ENCODE measurements at regions of chr2 and their contacts with region 1.

Region 1: GRCh38 chr2:85551698-85552678 is 9.3 kb downstream of the GGCX start:
- DNase-seq: peak; percentile 95
- H3K4me3 ChIP-seq: no peak overlapping the region
- H3K27ac ChIP-seq: no peak overlapping the region
- H3K4me1 ChIP-seq: peaks cover 0 to 9% (median 0%) of the 10 kb centered on the region in 4 donors
- H3K27me3 ChIP-seq: no peaks in the 10 kb centered on the region
- CTCF ChIP-seq: peak; percentile 88 to 92 (median 92)
- EP300 ChIP-seq: no peak
- POLR2A ChIP-seq: no peak

Region 2: DNA sequence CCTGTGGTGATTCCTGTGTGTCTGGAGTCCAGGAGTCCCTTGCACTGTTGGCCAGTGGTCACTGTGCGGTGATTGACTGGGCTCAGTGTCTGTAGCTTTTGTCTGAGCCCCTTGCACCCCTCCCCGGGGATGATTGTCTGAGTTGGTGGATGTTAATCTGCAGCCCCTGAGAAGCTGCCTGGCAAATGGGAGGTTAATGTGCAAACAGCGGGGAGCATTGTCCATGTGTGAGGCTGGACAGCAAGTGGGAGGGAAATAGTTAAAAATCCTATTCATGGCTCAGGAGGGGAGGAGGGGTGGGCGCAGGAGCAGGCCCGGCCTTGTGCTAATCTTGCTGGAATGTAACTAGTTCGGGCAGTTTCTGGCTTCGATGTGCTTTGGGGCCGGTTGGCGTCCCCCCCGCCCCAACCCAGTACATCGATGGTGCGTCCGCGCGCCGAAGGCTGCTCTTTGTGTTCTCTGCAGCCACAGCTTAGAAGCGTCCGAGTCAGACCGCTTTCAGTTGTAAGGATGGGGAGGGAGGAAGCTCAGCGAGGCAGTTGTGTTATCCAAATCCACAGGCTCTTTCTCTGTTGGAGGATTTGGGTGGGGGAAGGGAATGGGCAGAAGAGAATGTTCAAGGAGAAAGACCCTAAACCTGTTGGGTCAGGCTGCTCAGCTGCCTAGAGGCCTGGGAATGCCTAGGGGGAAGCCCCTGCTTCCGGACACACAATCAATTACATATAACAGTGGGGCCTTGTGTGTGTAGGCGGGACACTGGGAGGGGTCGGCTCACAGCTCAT is 296.0 kb before region 1 on chr2:
- intact Hi-C with region 1: no loop called
- DNase-seq: no peak
- H3K4me3 ChIP-seq: peak overlapping the region; percentile 27 to 45 (median 33)
- H3K27ac ChIP-seq: peak overlapping the region; percentile 18 to 52 (median 38)
- H3K4me1 ChIP-seq: peaks cover 58 to 78% (median 61%) of the 10 kb centered on the region in 4 donors
- H3K27me3 ChIP-seq: no peaks in the 10 kb centered on the region
- CTCF ChIP-seq: no peak
- EP300 ChIP-seq: no peak
- POLR2A ChIP-seq: no peak

Region 3: DNA sequence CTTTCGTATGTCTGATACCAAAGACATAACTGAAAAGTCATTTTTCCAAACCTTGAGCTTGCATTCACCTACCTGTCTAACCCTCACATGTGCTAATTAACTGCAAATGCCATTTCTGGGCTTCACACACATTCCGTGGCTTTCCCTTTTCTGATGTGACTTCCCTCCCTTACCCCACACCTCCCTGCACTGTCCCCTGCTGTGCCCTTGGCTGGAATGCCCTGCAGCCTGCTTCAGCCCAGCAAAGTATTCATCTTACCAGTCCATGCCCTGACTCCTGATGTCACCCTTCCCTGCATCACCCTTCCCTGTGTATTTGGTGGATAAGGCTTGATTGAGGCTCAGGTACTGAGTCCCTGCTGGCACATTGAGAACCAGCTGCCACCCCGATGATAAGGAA is 209.8 kb before region 1 on chr2:
- intact Hi-C with region 1: no loop called
- DNase-seq: no peak
- H3K4me3 ChIP-seq: no peak overlapping the region
- H3K27ac ChIP-seq: no peak overlapping the region
- H3K4me1 ChIP-seq: peaks cover 0 to 9% (median 8%) of the 10 kb centered on the region in 4 donors
- H3K27me3 ChIP-seq: no peaks in the 10 kb centered on the region
- CTCF ChIP-seq: no peak
- EP300 ChIP-seq: no peak
- POLR2A ChIP-seq: no peak

Region 4: GRCh38 chr2:85420536-85421259 is 131.3 kb before region 1 on chr2:
- intact Hi-C with region 1: loop called (anchors 1 kb)
- DNase-seq: peak; percentile 97
- H3K4me3 ChIP-seq: peak overlapping the region; percentile 20 to 32 (median 24)
- H3K27ac ChIP-seq: peak overlapping the region; percentile 65 to 96 (median 90)
- H3K4me1 ChIP-seq: peaks cover 30 to 34% (median 33%) of the 10 kb centered on the region in 4 donors
- H3K27me3 ChIP-seq: no peaks in the 10 kb centered on the region
- CTCF ChIP-seq: peak in 2 of 3 experiments; percentile 100
- EP300 ChIP-seq: no peak
- POLR2A ChIP-seq: no peak

Region 5: GRCh38 chr2:85589982-85590791 is 38.2 kb after region 1 on chr2:
- intact Hi-C with region 1: loop called (anchors 5 kb)
- DNase-seq: no peak
- H3K4me3 ChIP-seq: no peak overlapping the region
- H3K27ac ChIP-seq: peak overlapping the region; percentile 59 to 91 (median 70)
- H3K4me1 ChIP-seq: peaks cover 81 to 87% (median 81%) of the 10 kb centered on the region in 4 donors
- H3K27me3 ChIP-seq: no peaks in the 10 kb centered on the region
- CTCF ChIP-seq: no peak
- EP300 ChIP-seq: no peak
- POLR2A ChIP-seq: no peak